Ascending aorta (tissue), 2 donors: ENCODE measurements at regions of chr4 and their contacts with region 1.

Region 1: DNA sequence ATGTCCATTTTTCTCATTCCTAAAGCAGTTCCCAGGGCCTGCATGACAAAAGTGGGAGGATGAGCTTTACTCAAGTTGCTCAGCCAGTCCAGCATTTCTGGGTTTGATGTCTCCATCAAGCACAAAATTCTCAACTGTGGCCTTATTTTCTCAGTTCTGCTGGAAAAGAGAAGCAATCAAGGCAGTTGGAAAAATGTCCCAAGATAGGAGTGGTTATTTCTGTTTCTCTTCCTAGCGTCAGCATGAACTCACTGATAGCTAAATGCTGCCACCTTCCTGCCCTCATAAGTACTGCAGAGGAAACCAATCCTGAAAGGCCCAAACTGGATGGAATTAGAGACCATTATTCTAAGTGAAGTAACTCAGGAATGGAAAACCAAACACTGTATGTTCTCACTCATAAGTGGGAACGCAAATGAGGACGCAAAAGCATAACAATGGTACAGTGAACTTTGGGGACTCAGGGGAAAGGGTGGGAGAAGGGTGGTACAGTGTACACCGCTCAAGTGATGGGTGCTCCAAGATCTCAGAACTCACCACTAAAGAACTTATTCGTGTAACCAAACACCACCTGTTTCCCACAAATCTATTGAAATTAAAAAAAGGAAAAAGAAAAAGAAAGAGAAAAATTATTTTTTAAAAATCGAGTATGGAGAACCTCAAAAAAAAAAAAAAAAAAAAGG is 29.6 kb downstream of the ADH7 start:
- DNase-seq: peak in 1 of 2 donors; percentile 85
- H3K4me3 ChIP-seq: no peak overlapping the region
- H3K27ac ChIP-seq: peak overlapping the region; percentile 91 to 94
- H3K4me1 ChIP-seq: peaks cover 11 to 44% of the 10 kb centered on the region in 2 donors
- H3K27me3 ChIP-seq: no peaks in the 10 kb centered on the region
- CTCF ChIP-seq: peak; percentile 90 to 95 (median 92)

Region 2: DNA sequence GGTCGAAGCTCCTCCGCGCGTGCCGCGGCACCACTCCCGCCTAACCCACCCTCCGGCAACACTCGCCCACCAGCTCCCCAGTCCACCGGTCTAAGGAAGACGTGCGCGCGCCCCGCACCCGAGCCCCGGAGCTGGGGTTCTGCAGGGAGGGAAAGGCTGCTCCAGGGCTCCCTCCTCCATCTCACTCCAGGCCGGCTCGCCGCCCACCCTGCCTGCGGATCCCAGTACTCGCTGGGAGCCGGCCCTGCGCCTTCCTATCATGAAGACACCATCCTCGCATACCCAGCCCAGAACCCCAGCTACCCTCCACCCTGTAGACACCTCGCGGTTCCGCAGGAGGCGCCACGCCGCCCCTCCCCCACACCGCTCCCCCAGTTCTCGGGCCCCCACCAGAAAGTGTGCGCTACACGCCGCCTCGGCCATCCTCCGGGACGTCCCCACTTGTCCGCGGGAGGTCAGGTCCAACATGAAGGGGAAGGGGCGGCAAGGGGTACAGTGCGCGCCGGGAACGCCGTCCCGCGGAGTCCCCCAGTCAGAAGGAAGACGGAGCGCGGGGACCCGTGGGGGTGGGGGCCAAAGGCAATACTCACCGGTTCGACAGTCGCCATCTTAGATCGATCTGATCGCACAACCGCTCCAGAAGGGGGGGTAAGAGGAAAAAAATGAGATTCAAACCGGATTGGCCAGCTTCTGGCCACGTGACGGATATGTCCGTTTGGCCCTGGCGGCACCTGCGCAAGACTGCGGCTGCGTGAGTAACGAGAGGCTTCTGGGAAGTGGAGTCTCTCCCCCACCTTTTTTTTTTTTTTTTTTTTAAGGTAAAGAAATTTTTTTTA is 476.9 kb before region 1 on chr4 and contains the start of gene EIF4E:
- intact Hi-C with region 1: loop called (anchors 2 kb)
- DNase-seq: peak; percentile 94 to 98
- H3K4me3 ChIP-seq: peak within 1 kb of the TSS; percentile 84 to 93
- H3K27ac ChIP-seq: peak within 1 kb of the TSS; percentile 92 to 97
- H3K4me1 ChIP-seq: peaks cover 0 to 8% of the 10 kb centered on the region in 2 donors
- H3K27me3 ChIP-seq: no peaks in the 10 kb centered on the region
- CTCF ChIP-seq: peak in 2 of 3 experiments; percentile 23 to 26
- total RNA-seq, gene EIF4E: 6.0 TPM

Region 3: GRCh38 chr4:99088481-99089365 is 316.9 kb before region 1 on chr4 and contains the start of gene ADH5:
- intact Hi-C with region 1: loop called (anchors 10 kb)
- DNase-seq: peak; percentile 46 to 92
- H3K4me3 ChIP-seq: peak within 1 kb of the TSS; percentile 87 to 95
- H3K27ac ChIP-seq: peak within 1 kb of the TSS; percentile 97 to 98
- H3K4me1 ChIP-seq: peaks cover 0 to 15% of the 10 kb centered on the region in 2 donors
- H3K27me3 ChIP-seq: no peaks in the 10 kb centered on the region
- CTCF ChIP-seq: no peak
- total RNA-seq, gene ADH5: 93.4 TPM

Region 4: DNA sequence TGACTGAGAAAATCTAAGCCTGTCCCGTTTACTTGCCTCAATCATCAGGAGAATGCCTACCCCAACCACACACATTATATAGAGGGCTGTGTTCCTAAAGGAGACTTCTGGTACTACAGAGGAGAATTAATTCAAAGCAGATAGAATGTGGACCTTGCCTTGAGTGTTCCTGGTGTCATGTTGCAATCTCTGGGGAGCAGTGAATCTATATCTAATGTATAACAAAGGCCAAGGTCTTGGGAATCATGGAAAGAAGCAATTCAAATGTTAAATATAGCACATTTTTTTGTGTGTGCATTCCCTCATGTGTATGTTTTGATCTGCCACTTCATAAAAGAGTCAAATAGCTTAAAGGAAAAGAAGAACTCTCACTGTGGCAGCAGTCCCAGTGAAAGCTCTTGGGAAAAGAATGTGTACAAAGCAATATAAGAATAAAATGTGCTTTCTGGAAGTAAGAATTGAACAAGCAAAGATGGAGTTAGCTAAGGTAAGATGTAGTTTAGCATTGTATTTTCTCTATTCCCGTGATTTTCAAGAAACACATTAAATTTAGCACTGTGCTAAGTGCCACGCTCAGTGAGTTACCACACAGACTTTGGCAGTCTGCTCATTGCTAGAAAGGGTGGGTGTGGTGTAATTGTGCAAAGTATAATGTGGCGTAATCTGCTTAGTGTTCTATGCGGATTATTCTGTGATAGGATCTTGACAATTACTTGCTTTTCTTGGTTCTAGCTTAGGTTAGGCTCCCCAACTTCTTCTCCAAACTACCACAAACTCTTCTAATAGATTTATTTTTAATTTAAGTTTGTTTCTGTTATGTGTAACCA is 200.2 kb before region 1 on chr4:
- intact Hi-C with region 1: loop called (anchors 1 kb)
- DNase-seq: peak in 1 of 2 donors; percentile 77
- H3K4me3 ChIP-seq: no peak overlapping the region
- H3K27ac ChIP-seq: peak overlapping the region; percentile 75 to 85
- H3K4me1 ChIP-seq: peaks cover 9 to 40% of the 10 kb centered on the region in 2 donors
- H3K27me3 ChIP-seq: no peaks in the 10 kb centered on the region
- CTCF ChIP-seq: no peak

Region 5: GRCh38 chr4:99300934-99301333 is 104.6 kb before region 1 on chr4:
- intact Hi-C with region 1: loop called (anchors 2 kb)
- DNase-seq: peak in 1 of 2 donors; percentile 93
- H3K4me3 ChIP-seq: no peak overlapping the region
- H3K27ac ChIP-seq: peak overlapping the region; percentile 81 to 88
- H3K4me1 ChIP-seq: peaks cover 3 to 16% of the 10 kb centered on the region in 2 donors
- H3K27me3 ChIP-seq: no peaks in the 10 kb centered on the region
- CTCF ChIP-seq: no peak